WTC11 (cell line): ENCODE measurements at regions of chr15 and their contacts with region 1.

Region 1: GRCh38 chr15:26891448-26892181 is 24.8 kb downstream of the GABRA5 start:
- DNase-seq: peak; percentile 90
- ATAC-seq: peak; percentile 87
- H3K4me3 Mint-ChIP-seq: no peak overlapping the region
- H3K27ac Mint-ChIP-seq: no peak overlapping the region
- H3K4me1 Mint-ChIP-seq: peaks cover 8% of the 10 kb centered on the region
- H3K27me3 Mint-ChIP-seq: no peaks in the 10 kb centered on the region
- CTCF ChIP-seq: peak; percentile 59

Region 2: GRCh38 chr15:26910715-26911114 is 19.1 kb after region 1 on chr15:
- CTCF ChIA-PET with region 1: interaction called, 10 read pairs
- POLR2A ChIA-PET with region 1: no interaction called
- DNase-seq: no peak
- ATAC-seq: no peak
- H3K4me3 Mint-ChIP-seq: no peak overlapping the region
- H3K27ac Mint-ChIP-seq: no peak overlapping the region
- H3K4me1 Mint-ChIP-seq: no peaks in the 10 kb centered on the region
- H3K27me3 Mint-ChIP-seq: no peaks in the 10 kb centered on the region
- CTCF ChIP-seq: no peak

Region 3: GRCh38 chr15:26967719-26968269 is 76.2 kb after region 1 on chr15:
- CTCF ChIA-PET with region 1: interaction called, 38 read pairs
- POLR2A ChIA-PET with region 1: no interaction called
- DNase-seq: peak; percentile 75
- ATAC-seq: peak; percentile 64
- H3K4me3 Mint-ChIP-seq: peak overlapping the region; percentile 77
- H3K27ac Mint-ChIP-seq: no peak overlapping the region
- H3K4me1 Mint-ChIP-seq: peaks cover 7% of the 10 kb centered on the region
- H3K27me3 Mint-ChIP-seq: peaks cover 60% of the 10 kb centered on the region
- CTCF ChIP-seq: no peak

Region 4: DNA sequence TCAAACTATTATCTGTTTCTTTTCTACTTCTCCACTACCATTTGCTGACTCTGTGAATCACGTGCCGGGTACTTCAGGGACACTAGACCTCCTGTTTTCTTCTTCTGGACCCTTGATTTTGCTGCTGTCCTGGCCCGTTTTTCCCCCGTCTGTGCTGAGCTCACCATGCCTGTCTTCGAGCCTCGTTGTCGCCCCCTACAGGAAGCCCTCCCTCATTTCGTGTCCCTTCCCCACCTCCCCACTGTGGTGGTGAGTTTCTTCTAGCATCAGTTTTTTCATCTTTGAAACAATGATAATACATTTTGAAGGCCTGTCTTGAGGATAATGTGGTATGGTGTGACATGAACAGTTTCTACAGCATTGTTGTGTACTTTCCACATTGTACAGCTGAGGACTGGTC is 92.2 kb after region 1 on chr15:
- CTCF ChIA-PET with region 1: interaction called, 12 read pairs
- POLR2A ChIA-PET with region 1: no interaction called
- DNase-seq: peak; percentile 65
- ATAC-seq: peak; percentile 38; the same call in 1 of the 2 replicates
- H3K4me3 Mint-ChIP-seq: no peak overlapping the region
- H3K27ac Mint-ChIP-seq: no peak overlapping the region
- H3K4me1 Mint-ChIP-seq: peaks cover 6% of the 10 kb centered on the region
- H3K27me3 Mint-ChIP-seq: 0 out of 2 replicates have a peak, but pooled peaks cover 4% of the 10 kb centered on the region
- CTCF ChIP-seq: peak; percentile 74

Region 5: GRCh38 chr15:27028858-27029477 is 137.4 kb after region 1 on chr15:
- CTCF ChIA-PET with region 1: interaction called, 11 read pairs
- POLR2A ChIA-PET with region 1: no interaction called
- DNase-seq: no peak
- ATAC-seq: no peak
- H3K4me3 Mint-ChIP-seq: no peak overlapping the region
- H3K27ac Mint-ChIP-seq: no peak overlapping the region
- H3K4me1 Mint-ChIP-seq: peaks cover 24% of the 10 kb centered on the region
- H3K27me3 Mint-ChIP-seq: no peaks in the 10 kb centered on the region
- CTCF ChIP-seq: no peak

Region 6: GRCh38 chr15:27059610-27060202 is 168.1 kb after region 1 on chr15:
- CTCF ChIA-PET with region 1: interaction called, 17 read pairs
- POLR2A ChIA-PET with region 1: no interaction called
- DNase-seq: peak; percentile 72
- ATAC-seq: peak; percentile 95
- H3K4me3 Mint-ChIP-seq: no peak overlapping the region
- H3K27ac Mint-ChIP-seq: no peak overlapping the region
- H3K4me1 Mint-ChIP-seq: no peaks in the 10 kb centered on the region
- H3K27me3 Mint-ChIP-seq: no peaks in the 10 kb centered on the region
- CTCF ChIP-seq: peak; percentile 59; the same call in 1 of the 2 replicates

Region 7: DNA sequence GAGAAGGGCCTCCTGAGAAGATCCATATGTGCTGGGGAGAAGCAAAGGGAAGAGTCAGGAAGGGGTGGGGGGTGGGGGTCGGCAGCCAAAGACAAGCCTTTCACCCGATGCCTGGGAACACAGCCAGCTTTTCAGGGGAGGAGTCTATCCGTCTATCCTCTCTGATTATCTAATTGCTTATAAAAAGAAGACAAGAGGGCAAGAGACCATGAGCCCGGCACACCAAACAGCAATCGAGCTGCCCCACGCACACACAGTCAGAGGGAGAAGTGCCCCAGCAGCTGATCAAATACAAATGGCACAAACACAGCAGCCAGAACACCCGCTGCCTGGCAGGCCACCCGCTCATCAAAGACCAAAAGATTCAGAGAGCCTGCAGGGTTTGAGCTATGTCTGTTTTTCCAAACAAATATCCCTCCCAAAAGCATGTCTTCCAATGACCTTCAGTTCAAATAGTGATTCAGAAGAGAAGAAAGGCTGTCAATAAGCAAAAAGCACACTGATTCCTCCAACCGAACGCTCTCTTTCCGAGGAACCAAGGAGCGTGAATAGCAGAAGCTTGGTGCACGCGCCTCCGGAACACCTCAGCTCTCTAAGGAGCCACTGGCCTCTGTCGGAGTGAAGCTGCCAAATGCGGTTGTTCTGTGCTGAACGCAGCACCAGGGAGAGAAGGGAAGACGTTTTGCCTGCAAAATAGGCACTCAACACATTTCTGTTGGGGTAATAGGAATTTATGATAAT is 788.3 kb after region 1 on chr15:
- CTCF ChIA-PET with region 1: interaction called, 11 read pairs
- POLR2A ChIA-PET with region 1: no interaction called
- DNase-seq: no peak
- ATAC-seq: peak; percentile 40
- H3K4me3 Mint-ChIP-seq: no peak overlapping the region; the same call in 1 of the 2 replicates
- H3K27ac Mint-ChIP-seq: peak overlapping the region; percentile 2; the same call in 1 of the 2 replicates
- H3K4me1 Mint-ChIP-seq: peaks cover 27% of the 10 kb centered on the region
- H3K27me3 Mint-ChIP-seq: peaks cover 8% of the 10 kb centered on the region
- CTCF ChIP-seq: no peak